ENCODE measurements at regions of chr16 and their contacts with region 1.

Region 1: GRCh38 chr16:64051824-64052223 is 1070.0 kb downstream of the CDH11 start:
- DNase-seq: no peak
- H3K4me3 ChIP-seq: no peak overlapping the region
- H3K27ac ChIP-seq: no peak overlapping the region
- H3K4me1 ChIP-seq: no peaks in the 10 kb centered on the region
- H3K27me3 ChIP-seq: no peaks in the 10 kb centered on the region
- CTCF ChIP-seq: peak in 1 of 4 experiments; percentile 18
- EP300 ChIP-seq: no peak
- POLR2A ChIP-seq: no peak

Region 2: GRCh38 chr16:63461248-63461841 is 590.5 kb before region 1 on chr16:
- intact Hi-C with region 1: loop called (anchors 10 kb)
- DNase-seq: no peak
- H3K4me3 ChIP-seq: no peak overlapping the region
- H3K27ac ChIP-seq: no peak overlapping the region
- H3K4me1 ChIP-seq: no peaks in the 10 kb centered on the region
- H3K27me3 ChIP-seq: no peaks in the 10 kb centered on the region
- CTCF ChIP-seq: peak in 1 of 4 experiments; percentile 44
- EP300 ChIP-seq: no peak
- POLR2A ChIP-seq: no peak

Measured in sigmoid colon (tissue), 7 donors.